CD4-positive, alpha-beta T cell (primary cell): ENCODE measurements at regions of chr22 and their contacts with region 1.

Region 1: DNA sequence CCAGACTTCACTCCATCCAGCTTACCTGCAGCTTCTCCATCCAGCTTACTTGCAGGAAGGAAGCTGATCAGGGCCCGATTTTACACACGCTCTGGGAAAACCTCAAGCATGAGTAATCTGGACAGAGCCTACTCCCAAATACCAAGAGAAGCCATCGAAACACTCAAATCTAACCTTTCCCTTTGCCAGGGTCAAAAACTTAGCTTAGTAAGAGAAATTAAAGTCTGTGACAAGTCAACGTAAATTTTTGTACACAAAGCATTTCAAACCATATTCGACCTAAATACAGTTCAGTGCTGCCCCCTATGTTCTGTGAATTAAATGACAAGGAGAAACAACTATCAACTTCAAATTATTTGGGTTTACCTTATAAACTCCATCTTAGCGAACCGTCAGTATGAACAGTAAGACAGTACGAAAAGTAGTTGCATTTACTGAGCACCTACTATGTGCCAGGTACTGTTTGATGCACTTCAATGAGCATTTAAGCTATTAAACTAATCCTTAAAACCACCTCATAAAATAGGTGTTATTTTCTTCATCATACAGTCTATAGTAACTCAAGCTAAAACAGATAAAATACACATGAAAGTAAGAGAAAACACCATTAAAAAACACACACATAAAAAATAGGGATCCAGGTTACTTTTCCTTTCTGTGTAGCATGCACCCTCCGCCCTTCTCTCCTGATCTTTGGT is 36.9 kb downstream of the ARFGAP3 start:
- DNase-seq: peak in 2 of 14 experiments; percentile 30 to 53
- ATAC-seq: no peak
- H3K4me3 ChIP-seq: no peak overlapping the region
- H3K4me3 Mint-ChIP-seq: no peak overlapping the region
- H3K27ac ChIP-seq: no peak overlapping the region
- H3K27ac Mint-ChIP-seq: no peak overlapping the region
- H3K4me1 ChIP-seq: no peaks in the 10 kb centered on the region
- H3K4me1 Mint-ChIP-seq: peaks cover 7% of the 10 kb centered on the region
- H3K27me3 ChIP-seq: no peaks in the 10 kb centered on the region
- H3K27me3 Mint-ChIP-seq: no peaks in the 10 kb centered on the region
- CTCF ChIP-seq: peak; percentile 66

Region 2: GRCh38 chr22:42533638-42533977 is 286.6 kb before region 1 on chr22:
- CTCF ChIA-PET with region 1: no interaction called
- POLR2A ChIA-PET with region 1: no interaction called
- intact Hi-C with region 1: loop called in 1 of 2 experiments (anchors 5 kb)
- DNase-seq: no peak
- ATAC-seq: no peak
- H3K4me3 ChIP-seq: peak overlapping the region; percentile 53
- H3K4me3 Mint-ChIP-seq: peak overlapping the region; percentile 84
- H3K27ac ChIP-seq: peak overlapping the region; percentile 48 to 81
- H3K27ac Mint-ChIP-seq: peak overlapping the region; percentile 87
- H3K4me1 ChIP-seq: peaks cover 14% of the 10 kb centered on the region
- H3K4me1 Mint-ChIP-seq: peaks cover 9% of the 10 kb centered on the region
- H3K27me3 ChIP-seq: no peaks in the 10 kb centered on the region
- H3K27me3 Mint-ChIP-seq: no peaks in the 10 kb centered on the region
- CTCF ChIP-seq: no peak